GM10248 (cell line): ENCODE measurements at regions of chr4 and their contacts with region 1.

Region 1: DNA sequence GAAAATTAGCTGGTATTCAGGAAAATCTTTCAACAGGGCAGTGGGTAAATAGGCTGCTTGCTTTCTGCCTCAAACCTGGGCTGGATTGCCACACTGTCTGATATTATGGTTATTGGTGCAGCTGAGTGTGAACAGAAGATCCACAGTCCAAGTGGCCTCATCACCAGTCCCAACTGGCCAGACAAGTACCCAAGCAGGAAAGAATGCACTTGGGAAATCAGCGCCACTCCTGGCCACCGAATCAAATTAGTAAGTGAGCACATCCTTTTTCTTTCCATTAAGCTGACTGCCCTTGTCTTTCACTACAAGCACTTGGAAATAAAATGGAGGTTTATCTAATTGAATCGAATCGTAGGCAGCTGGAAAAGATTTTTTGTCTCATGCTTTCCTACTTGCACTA is 204.7 kb downstream of the TLL1 start:
- DNase-seq: no peak
- CTCF ChIP-seq: no peak

Region 2: DNA sequence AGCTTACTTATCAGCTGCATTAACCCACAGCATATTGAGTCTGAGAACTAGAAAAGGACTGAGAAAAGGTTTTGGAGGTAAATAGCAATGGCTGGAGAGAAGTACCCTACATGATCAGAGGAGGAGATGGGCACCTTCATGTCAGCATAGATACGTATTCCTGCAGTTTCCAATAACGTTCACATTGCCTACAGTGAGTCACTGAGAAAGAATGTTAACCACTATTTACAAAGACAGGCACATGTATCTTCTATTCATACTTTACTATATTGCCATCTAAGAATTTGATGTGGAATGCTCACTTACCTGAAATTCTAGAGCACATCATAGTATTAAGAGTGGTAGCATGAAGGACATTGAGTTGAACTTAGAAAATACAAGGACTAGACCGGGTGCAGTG is 112.3 kb before region 1 on chr4:
- CTCF ChIA-PET with region 1: no interaction called
- POLR2A ChIA-PET with region 1: no interaction called
- DNase-seq: no peak
- CTCF ChIP-seq: no peak

Region 3: GRCh38 chr4:166091912-166092510 is 14.2 kb after region 1 on chr4:
- CTCF ChIA-PET with region 1: interaction called, 14 read pairs
- POLR2A ChIA-PET with region 1: no interaction called
- DNase-seq: peak; percentile 6
- CTCF ChIP-seq: peak; percentile 58